H1 (cell line): ENCODE measurements at regions of chr14 and their contacts with region 1.

Region 1: GRCh38 chr14:96100161-96101029 is 61.2 kb downstream of the C14orf132 start:
- DNase-seq: peak; percentile 66 to 96
- H3K4me3 ChIP-seq: no peak overlapping the region
- H3K27ac ChIP-seq: no peak overlapping the region
- H3K4me1 ChIP-seq: peaks cover 1 to 9% (median 5%) of the 10 kb centered on the region in 4 experiments
- H3K27me3 ChIP-seq: no peaks in the 10 kb centered on the region
- CTCF ChIP-seq: peak; percentile 86 to 100 (median 93)
- EP300 ChIP-seq: no peak; a peak in 1 of 3 replicates
- POLR2A ChIP-seq: no peak
- RAD21 ChIP-seq: peak; percentile 99 to 100

Region 2: GRCh38 chr14:96001866-96002497 is 98.4 kb before region 1 on chr14:
- CTCF ChIA-PET with region 1: interaction called, 29 read pairs
- POLR2A ChIA-PET with region 1: no interaction called
- DNase-seq: no peak
- H3K4me3 ChIP-seq: no peak overlapping the region
- H3K27ac ChIP-seq: no peak overlapping the region
- H3K4me1 ChIP-seq: peaks cover 0 to 2% (median 0%) of the 10 kb centered on the region in 4 experiments; a peak in 1 of 7 replicates
- H3K27me3 ChIP-seq: no peaks in the 10 kb centered on the region
- CTCF ChIP-seq: no peak
- EP300 ChIP-seq: no peak
- POLR2A ChIP-seq: no peak
- RAD21 ChIP-seq: no peak

Region 3: GRCh38 chr14:96065664-96066459 is 34.5 kb before region 1 on chr14:
- CTCF ChIA-PET with region 1: interaction called, 46 read pairs
- POLR2A ChIA-PET with region 1: no interaction called
- DNase-seq: no peak
- H3K4me3 ChIP-seq: no peak overlapping the region
- H3K27ac ChIP-seq: no peak overlapping the region
- H3K4me1 ChIP-seq: no peaks in the 10 kb centered on the region
- H3K27me3 ChIP-seq: no peaks in the 10 kb centered on the region
- CTCF ChIP-seq: no peak
- EP300 ChIP-seq: no peak
- POLR2A ChIP-seq: no peak
- RAD21 ChIP-seq: no peak

Region 4: DNA sequence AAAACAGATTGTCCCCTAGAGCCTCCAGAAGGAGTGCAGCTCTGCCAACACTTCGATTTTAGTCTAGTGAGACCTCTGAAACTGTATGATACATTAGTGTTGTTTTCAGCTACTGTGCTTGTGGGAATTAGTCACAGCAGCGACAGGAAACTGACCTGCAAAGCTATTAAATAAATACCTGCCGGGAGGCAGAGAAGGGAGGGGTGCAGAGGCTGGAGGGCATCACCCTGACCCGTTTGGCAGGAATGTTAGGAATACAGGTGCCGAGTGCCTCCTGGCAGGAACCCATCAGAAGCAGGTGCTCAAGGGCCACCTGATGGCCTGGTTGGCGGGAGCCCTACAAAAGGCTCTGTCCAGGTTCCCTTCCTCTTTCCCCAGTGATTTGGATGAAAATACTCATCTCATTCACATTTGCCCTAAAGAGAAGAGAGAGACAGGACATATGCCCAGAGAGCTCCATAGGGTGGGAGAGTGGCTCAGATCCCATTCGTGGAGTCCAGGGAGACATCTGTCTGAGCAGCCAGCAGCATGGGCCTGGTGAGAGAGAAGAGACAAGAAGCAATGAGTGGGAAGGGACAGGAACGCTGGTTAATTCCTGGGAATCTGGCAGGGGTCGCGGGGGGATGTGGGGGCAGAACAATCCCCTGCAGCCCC is 16.6 kb before region 1 on chr14:
- CTCF ChIA-PET with region 1: interaction called, 31 read pairs
- POLR2A ChIA-PET with region 1: interaction called, 3 read pairs
- DNase-seq: no peak
- H3K4me3 ChIP-seq: no peak overlapping the region
- H3K27ac ChIP-seq: no peak overlapping the region
- H3K4me1 ChIP-seq: no peaks in the 10 kb centered on the region
- H3K27me3 ChIP-seq: no peaks in the 10 kb centered on the region
- CTCF ChIP-seq: no peak
- EP300 ChIP-seq: no peak
- POLR2A ChIP-seq: no peak
- RAD21 ChIP-seq: no peak

Region 5: GRCh38 chr14:96130854-96131253 is 30.5 kb after region 1 on chr14:
- CTCF ChIA-PET with region 1: interaction called, 10 read pairs
- POLR2A ChIA-PET with region 1: no interaction called
- DNase-seq: no peak
- H3K4me3 ChIP-seq: no peak overlapping the region
- H3K27ac ChIP-seq: no peak overlapping the region
- H3K4me1 ChIP-seq: no peaks in the 10 kb centered on the region
- H3K27me3 ChIP-seq: peaks cover 0 to 13% (median 6%) of the 10 kb centered on the region in 4 experiments; a peak in 4 of 7 replicates
- CTCF ChIP-seq: no peak
- EP300 ChIP-seq: no peak
- POLR2A ChIP-seq: no peak
- RAD21 ChIP-seq: no peak

Region 6: GRCh38 chr14:96264853-96265252 is 164.5 kb after region 1 on chr14:
- CTCF ChIA-PET with region 1: interaction called, 67 read pairs
- POLR2A ChIA-PET with region 1: no interaction called
- DNase-seq: no peak
- H3K4me3 ChIP-seq: no peak overlapping the region
- H3K27ac ChIP-seq: no peak overlapping the region
- H3K4me1 ChIP-seq: no peaks in the 10 kb centered on the region
- H3K27me3 ChIP-seq: no peaks in the 10 kb centered on the region
- CTCF ChIP-seq: peak; percentile 54 to 69 (median 66)
- EP300 ChIP-seq: no peak
- POLR2A ChIP-seq: no peak
- RAD21 ChIP-seq: peak; percentile 71 to 78

Region 7: GRCh38 chr14:96324219-96324618 is 223.8 kb after region 1 on chr14:
- CTCF ChIA-PET with region 1: no interaction called
- POLR2A ChIA-PET with region 1: no interaction called
- DNase-seq: no peak
- H3K4me3 ChIP-seq: no peak overlapping the region
- H3K27ac ChIP-seq: no peak overlapping the region
- H3K4me1 ChIP-seq: peaks cover 0 to 3% (median 0%) of the 10 kb centered on the region in 4 experiments; a peak in 1 of 7 replicates
- H3K27me3 ChIP-seq: no peaks in the 10 kb centered on the region
- CTCF ChIP-seq: no peak
- EP300 ChIP-seq: no peak
- POLR2A ChIP-seq: no peak
- RAD21 ChIP-seq: no peak